ENCODE measurements at regions of chr2 and their contacts with region 1.

Region 1: GRCh38 chr2:150487537-150488429 is at the start of gene RND3:
- DNase-seq: peak; percentile 96
- H3K4me3 ChIP-seq: peak within 1 kb of the TSS; percentile 95
- CTCF ChIP-seq: peak; percentile 82

Region 2: GRCh38 chr2:150595803-150596470 is 108.2 kb after region 1 on chr2:
- CTCF ChIA-PET with region 1: interaction called, 7 read pairs
- POLR2A ChIA-PET with region 1: interaction called, 28 read pairs
- DNase-seq: peak; percentile 91
- H3K4me3 ChIP-seq: no peak overlapping the region
- CTCF ChIP-seq: no peak

Region 3: DNA sequence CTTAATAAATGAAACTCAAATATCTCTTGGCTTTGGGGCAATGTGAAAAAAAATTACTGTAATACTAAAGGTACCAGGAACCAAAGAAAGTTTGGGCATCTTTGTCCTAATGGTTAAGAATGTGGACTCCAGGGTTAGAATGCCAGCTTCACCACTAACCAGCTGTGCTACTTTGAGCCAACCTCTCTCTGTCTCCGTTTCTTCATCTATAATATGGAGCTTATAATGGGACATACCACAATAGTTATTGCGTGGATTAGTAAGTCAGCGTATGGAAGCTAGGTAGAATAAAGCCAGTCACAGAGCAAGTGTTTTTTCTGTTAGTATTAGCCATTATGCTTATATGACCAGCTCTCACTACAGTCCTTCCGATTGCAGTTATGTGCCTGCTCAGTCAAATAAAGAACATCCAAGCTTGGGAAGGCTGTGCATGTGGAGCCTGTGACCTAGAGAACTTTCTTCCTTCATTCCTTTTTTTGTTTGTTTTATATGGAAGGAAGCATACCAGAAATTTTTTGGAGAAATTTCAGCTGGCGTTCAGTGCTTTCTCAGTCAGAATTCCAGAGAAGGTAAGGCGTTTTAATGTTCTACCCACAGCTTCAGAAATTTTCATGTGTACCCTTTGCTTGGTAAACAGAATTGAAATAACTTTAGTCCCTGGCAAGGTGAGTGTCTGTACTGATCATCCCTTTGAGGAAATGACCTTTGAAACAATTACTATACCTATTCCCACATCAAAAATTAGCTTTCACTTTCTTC is 113.7 kb after region 1 on chr2:
- CTCF ChIA-PET with region 1: interaction called, 7 read pairs
- POLR2A ChIA-PET with region 1: interaction called, 28 read pairs
- DNase-seq: no peak
- H3K4me3 ChIP-seq: no peak overlapping the region
- CTCF ChIP-seq: no peak

Region 4: DNA sequence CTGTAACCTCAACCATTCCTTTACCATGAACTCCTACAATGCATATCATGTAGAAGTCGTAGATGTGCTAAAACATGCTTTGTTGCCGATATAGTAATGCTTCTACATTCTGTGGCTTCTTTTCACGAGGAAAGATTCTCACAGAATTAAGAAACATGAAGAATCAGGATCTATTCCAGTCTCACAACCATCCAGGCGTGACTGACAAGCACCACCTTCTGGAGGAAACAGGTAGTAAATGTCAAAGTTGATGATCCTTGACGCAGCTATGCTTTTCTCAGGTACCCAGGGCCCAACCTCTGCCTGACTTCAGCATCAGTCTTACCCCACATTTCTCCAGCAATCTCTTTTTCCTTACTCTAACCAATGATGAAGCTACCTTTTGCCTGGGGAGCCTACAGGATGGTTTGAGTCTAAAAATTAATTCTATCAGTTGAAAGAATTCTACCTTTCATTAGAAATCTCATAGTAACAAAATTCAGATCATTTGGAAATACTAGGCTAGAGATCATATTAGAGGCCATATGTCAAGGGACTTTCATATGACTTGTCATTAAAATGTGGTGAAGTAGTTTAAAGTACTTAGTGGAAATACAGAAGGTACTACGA is 123.0 kb after region 1 on chr2:
- CTCF ChIA-PET with region 1: interaction called, 14 read pairs
- POLR2A ChIA-PET with region 1: interaction called, 4 read pairs
- DNase-seq: no peak
- H3K4me3 ChIP-seq: no peak overlapping the region
- CTCF ChIP-seq: peak; percentile 54